Naive thymus-derived CD4-positive, alpha-beta T cell (primary cell): ENCODE measurements at regions of chr11 and their contacts with region 1.

Region 1: GRCh38 chr11:6377902-6378639 is 12.2 kb upstream of the SMPD1 start:
- DNase-seq: peak in 5 of 9 donors; percentile 20 to 52 (median 45)
- ATAC-seq: peak; percentile 79
- H3K4me3 ChIP-seq: peak overlapping the region; percentile 17
- H3K4me3 Mint-ChIP-seq: peak overlapping the region; percentile 48 to 85 (median 72)
- H3K27ac ChIP-seq: peak overlapping the region; percentile 44
- H3K27ac Mint-ChIP-seq: peak overlapping the region; percentile 69 to 93 (median 85)
- H3K4me1 ChIP-seq: peaks cover 0 to 23% of the 10 kb centered on the region in 2 donors
- H3K4me1 Mint-ChIP-seq: peaks cover 14 to 44% (median 37%) of the 10 kb centered on the region in 7 donors
- H3K27me3 ChIP-seq: no peaks in the 10 kb centered on the region
- H3K27me3 Mint-ChIP-seq: no peaks in the 10 kb centered on the region

Region 2: GRCh38 chr11:5684646-5685362 is 693.3 kb before region 1 on chr11 and contains the start of gene TRIM5:
- CTCF ChIA-PET with region 1: no interaction called
- POLR2A ChIA-PET with region 1: no interaction called
- intact Hi-C with region 1: loop called in 1 of 2 experiments (anchors 10 kb)
- DNase-seq: peak; percentile 37 to 86 (median 83)
- ATAC-seq: peak; percentile 90
- H3K4me3 ChIP-seq: peak within 1 kb of the TSS; percentile 90
- H3K4me3 Mint-ChIP-seq: peak within 1 kb of the TSS; percentile 81 to 99 (median 94)
- H3K27ac ChIP-seq: peak within 1 kb of the TSS; percentile 76
- H3K27ac Mint-ChIP-seq: peak within 1 kb of the TSS; percentile 90 to 98 (median 95)
- H3K4me1 ChIP-seq: peaks cover 9 to 23% of the 10 kb centered on the region in 2 donors
- H3K4me1 Mint-ChIP-seq: peaks cover 28 to 83% (median 66%) of the 10 kb centered on the region in 7 donors
- H3K27me3 ChIP-seq: no peaks in the 10 kb centered on the region
- H3K27me3 Mint-ChIP-seq: no peaks in the 10 kb centered on the region
- total RNA-seq, gene TRIM5: 16.9 to 36.8 (median 26.2) TPM

Region 3: DNA sequence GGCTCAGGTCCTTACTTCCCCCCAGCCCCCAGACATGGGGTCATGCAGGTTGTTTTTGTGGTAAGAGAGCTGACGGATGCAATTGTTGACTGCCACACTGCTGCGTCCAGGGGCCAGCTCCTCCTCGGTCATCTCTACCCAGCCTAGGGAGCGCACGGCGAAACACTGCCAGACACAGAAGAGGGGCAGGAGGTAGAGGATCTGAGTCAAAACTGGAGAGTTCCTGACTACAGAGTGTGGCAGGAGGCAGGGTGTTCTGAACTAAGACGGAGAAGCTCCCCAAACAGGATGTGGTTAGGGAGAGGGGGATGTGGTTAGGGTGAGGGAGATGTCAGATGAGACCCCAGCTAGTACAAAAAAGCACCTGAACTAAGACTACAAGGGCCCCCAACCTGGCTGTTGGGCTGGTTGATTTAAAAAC is 24.5 kb after region 1 on chr11:
- CTCF ChIA-PET with region 1: interaction called, 41 read pairs
- POLR2A ChIA-PET with region 1: interaction called, 65 read pairs
- intact Hi-C with region 1: loop called (anchors 1 kb)
- DNase-seq: peak in 8 of 9 donors; percentile 69 to 99 (median 97)
- ATAC-seq: peak; percentile 92
- H3K4me3 ChIP-seq: peak overlapping the region; percentile 52
- H3K4me3 Mint-ChIP-seq: peak overlapping the region; percentile 74 to 94 (median 90)
- H3K27ac ChIP-seq: peak overlapping the region; percentile 80
- H3K27ac Mint-ChIP-seq: peak overlapping the region; percentile 94 to 100 (median 97)
- H3K4me1 ChIP-seq: peaks cover 53 to 83% of the 10 kb centered on the region in 2 donors
- H3K4me1 Mint-ChIP-seq: peaks cover 63 to 100% (median 87%) of the 10 kb centered on the region in 7 donors
- H3K27me3 ChIP-seq: no peaks in the 10 kb centered on the region
- H3K27me3 Mint-ChIP-seq: peaks cover 0 to 5% (median 0%) of the 10 kb centered on the region in 5 donors

Region 4: DNA sequence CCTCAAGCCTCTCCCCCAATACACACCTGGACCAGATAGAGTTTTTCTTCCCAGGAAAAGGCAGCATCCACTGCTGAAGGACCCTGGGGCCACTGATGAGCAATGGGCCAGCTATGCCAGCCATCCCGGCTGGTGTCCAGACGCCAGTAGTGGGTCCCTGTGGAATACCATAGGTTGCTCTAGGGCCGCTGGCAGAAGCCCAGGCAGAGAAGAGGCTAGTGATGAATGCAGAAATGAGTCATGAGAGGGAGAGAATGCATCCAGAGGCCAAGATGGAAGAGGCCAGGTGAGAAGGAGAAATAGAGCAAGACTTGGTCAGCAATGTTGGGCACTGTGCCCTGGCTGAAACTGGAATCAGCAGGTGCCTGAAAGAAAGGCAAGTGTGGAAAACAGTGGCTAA is 53.8 kb after region 1 on chr11:
- CTCF ChIA-PET with region 1: interaction called, 573 read pairs
- POLR2A ChIA-PET with region 1: interaction called, 23 read pairs
- intact Hi-C with region 1: no loop called
- DNase-seq: no peak
- ATAC-seq: no peak
- H3K4me3 ChIP-seq: no peak overlapping the region
- H3K4me3 Mint-ChIP-seq: no peak overlapping the region
- H3K27ac ChIP-seq: no peak overlapping the region
- H3K27ac Mint-ChIP-seq: no peak overlapping the region
- H3K4me1 ChIP-seq: no peaks in the 10 kb centered on the region
- H3K4me1 Mint-ChIP-seq: peaks cover 4 to 20% (median 6%) of the 10 kb centered on the region in 7 donors
- H3K27me3 ChIP-seq: no peaks in the 10 kb centered on the region
- H3K27me3 Mint-ChIP-seq: peaks cover 0 to 16% (median 0%) of the 10 kb centered on the region in 5 donors

Region 5: DNA sequence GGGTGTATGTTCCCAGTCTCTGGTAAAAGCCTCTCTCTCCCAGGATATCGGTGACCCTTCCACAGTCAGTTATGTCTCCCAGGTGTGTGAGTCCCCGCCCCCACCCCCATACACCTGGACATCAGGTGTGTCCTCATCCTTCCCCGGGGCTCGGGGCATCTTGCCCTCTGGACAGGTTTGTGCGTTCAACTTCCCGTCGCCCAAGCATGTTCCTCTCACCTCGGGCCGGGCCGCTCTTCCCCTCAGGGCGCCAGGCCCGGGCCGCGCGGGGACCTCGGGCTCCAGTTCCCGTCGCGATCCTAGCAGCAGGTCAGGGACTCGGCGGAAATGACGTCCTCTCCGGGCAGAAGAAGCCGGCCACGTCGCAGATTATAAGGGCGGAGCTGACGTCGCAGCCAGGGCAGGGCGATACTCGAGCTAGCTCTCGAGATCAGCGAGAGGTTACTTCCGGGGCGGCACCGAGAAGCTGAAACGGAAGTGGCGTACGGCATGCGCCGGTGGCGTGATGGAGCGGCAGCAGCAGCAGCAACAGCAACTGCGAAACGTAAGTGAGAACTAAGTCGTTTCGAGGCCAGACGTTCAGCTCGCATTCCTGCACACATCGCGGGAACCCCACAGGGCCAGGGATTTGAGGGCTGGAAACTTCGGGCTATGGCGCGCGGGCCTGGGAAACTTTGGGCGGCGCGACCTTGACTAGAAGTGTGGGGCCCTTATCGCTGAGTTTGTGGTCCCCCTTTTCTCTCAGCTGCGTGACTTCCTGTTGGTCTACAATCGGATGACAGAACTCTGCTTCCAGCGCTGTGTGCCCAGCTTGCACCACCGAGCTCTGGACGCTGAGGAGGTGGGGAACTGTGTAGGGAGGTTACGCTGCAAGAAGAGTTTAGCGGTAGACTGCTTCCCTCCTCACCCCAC is 103.2 kb after region 1 on chr11 and contains the starts of genes ARFIP2 and TIMM10B:
- CTCF ChIA-PET with region 1: interaction called, 14 read pairs
- POLR2A ChIA-PET with region 1: interaction called, 12 read pairs
- intact Hi-C with region 1: loop called in 1 of 2 experiments (anchors 2 kb)
- DNase-seq: peak; percentile 83 to 98 (median 94)
- ATAC-seq: peak; percentile 98
- H3K4me3 ChIP-seq: peak within 1 kb of the TSS; percentile 74
- H3K4me3 Mint-ChIP-seq: peak within 1 kb of the TSS; percentile 87 to 99 (median 97)
- H3K27ac ChIP-seq: peak within 1 kb of the TSS; percentile 86
- H3K27ac Mint-ChIP-seq: peak within 1 kb of the TSS; percentile 93 to 99 (median 98)
- H3K4me1 ChIP-seq: peaks cover 22 to 24% of the 10 kb centered on the region in 2 donors
- H3K4me1 Mint-ChIP-seq: peaks cover 29 to 48% (median 43%) of the 10 kb centered on the region in 7 donors
- H3K27me3 ChIP-seq: no peaks in the 10 kb centered on the region
- H3K27me3 Mint-ChIP-seq: no peaks in the 10 kb centered on the region
- total RNA-seq, gene ARFIP2: 48.6 to 63.4 (median 53.8) TPM
- total RNA-seq, gene TIMM10B: 39.3 to 68.4 (median 59.2) TPM

Region 6: GRCh38 chr11:6603287-6604080 is 225.4 kb after region 1 on chr11 and contains the starts of genes ILK and RRP8:
- CTCF ChIA-PET with region 1: interaction called, 4 read pairs
- POLR2A ChIA-PET with region 1: interaction called, 5 read pairs
- intact Hi-C with region 1: loop called (anchors 2 kb)
- DNase-seq: peak; percentile 69 to 86 (median 78)
- ATAC-seq: peak; percentile 92
- H3K4me3 ChIP-seq: peak within 1 kb of the TSS; percentile 85
- H3K4me3 Mint-ChIP-seq: no peak within 1 kb of the TSS
- H3K27ac ChIP-seq: peak within 1 kb of the TSS; percentile 86
- H3K27ac Mint-ChIP-seq: no peak within 1 kb of the TSS
- H3K4me1 ChIP-seq: peaks cover 51% of the 10 kb centered on the region in 2 donors
- H3K4me1 Mint-ChIP-seq: peaks cover 9 to 33% (median 21%) of the 10 kb centered on the region in 7 donors
- H3K27me3 ChIP-seq: no peaks in the 10 kb centered on the region
- H3K27me3 Mint-ChIP-seq: no peaks in the 10 kb centered on the region
- total RNA-seq, gene ILK: 34.4 to 165 (median 89.6) TPM
- total RNA-seq, gene RRP8: 21.4 to 37.9 (median 27.9) TPM

Region 7: GRCh38 chr11:6757373-6757967 is 379.4 kb after region 1 on chr11:
- CTCF ChIA-PET with region 1: interaction called, 3 read pairs
- POLR2A ChIA-PET with region 1: no interaction called
- intact Hi-C with region 1: loop called (anchors 2 to 5 kb)
- DNase-seq: peak in 8 of 9 donors; percentile 30 to 67 (median 56)
- ATAC-seq: peak; percentile 84
- H3K4me3 ChIP-seq: no peak overlapping the region
- H3K4me3 Mint-ChIP-seq: no peak overlapping the region
- H3K27ac ChIP-seq: no peak overlapping the region
- H3K27ac Mint-ChIP-seq: peak overlapping the region in 3 of 9 donors; percentile 22 to 34 (median 28)
- H3K4me1 ChIP-seq: no peaks in the 10 kb centered on the region
- H3K4me1 Mint-ChIP-seq: peaks cover 0 to 31% (median 10%) of the 10 kb centered on the region in 7 donors
- H3K27me3 ChIP-seq: peaks cover 0 to 7% of the 10 kb centered on the region in 2 donors
- H3K27me3 Mint-ChIP-seq: peaks cover 3 to 25% (median 5%) of the 10 kb centered on the region in 5 donors